ENCODE measurements at regions of chr9 and their contacts with region 1.

Region 1: GRCh38 chr9:107866711-107867311 is 377.2 kb upstream of the KLF4 start:
- DNase-seq: peak; percentile 23
- ATAC-seq: peak; percentile 14; the same call in 1 of the 2 replicates
- H3K4me3 ChIP-seq: no peak overlapping the region
- H3K27ac ChIP-seq: no peak overlapping the region
- H3K4me1 ChIP-seq: no peaks in the 10 kb centered on the region; the same call in 1 of the 2 replicates
- H3K27me3 ChIP-seq: no peaks in the 10 kb centered on the region
- CTCF ChIP-seq: no peak
- POLR2A ChIP-seq: no peak
- RAD21 ChIP-seq: no peak

Region 2: GRCh38 chr9:107815782-107816560 is 50.8 kb before region 1 on chr9:
- CTCF ChIA-PET with region 1: interaction called, 3 read pairs
- POLR2A ChIA-PET with region 1: no interaction called
- dilution Hi-C with region 1: no loop called
- in situ Hi-C with region 1: no loop called
- intact Hi-C with region 1: loop called (anchors 1 kb)
- DNase-seq: no peak
- ATAC-seq: no peak
- H3K4me3 ChIP-seq: no peak overlapping the region
- H3K27ac ChIP-seq: no peak overlapping the region
- H3K4me1 ChIP-seq: no peaks in the 10 kb centered on the region; the same call in 1 of the 2 replicates
- H3K27me3 ChIP-seq: no peaks in the 10 kb centered on the region
- CTCF ChIP-seq: no peak
- POLR2A ChIP-seq: no peak
- RAD21 ChIP-seq: no peak

Measured in IMR-90 (cell line).